ENCODE measurements at regions of chr20 and their contacts with region 1.

Region 1: GRCh38 chr20:63979560-63980316 is at the start of gene SAMD10:
- DNase-seq: peak; percentile 52
- H3K4me3 ChIP-seq: peak within 1 kb of the TSS; percentile 42 to 98
- H3K27ac ChIP-seq: no peak within 1 kb of the TSS
- H3K4me1 ChIP-seq: peaks cover 29% of the 10 kb centered on the region
- H3K27me3 ChIP-seq: no peaks in the 10 kb centered on the region
- CTCF ChIP-seq: peak in 1 of 3 experiments; percentile 33
- POLR2A ChIP-seq: no peak
- total RNA-seq, gene SAMD10: 6.2 to 10.7 TPM

Region 2: GRCh38 chr20:63537525-63538203 is 442.1 kb before region 1 on chr20:
- intact Hi-C with region 1: loop called (anchors 5 kb)
- DNase-seq: peak; percentile 73
- H3K4me3 ChIP-seq: no peak overlapping the region
- H3K27ac ChIP-seq: no peak overlapping the region
- H3K4me1 ChIP-seq: peaks cover 10% of the 10 kb centered on the region
- H3K27me3 ChIP-seq: no peaks in the 10 kb centered on the region
- CTCF ChIP-seq: peak; percentile 84 to 89 (median 87)
- POLR2A ChIP-seq: no peak

Measured in testis (tissue), 5 donors.